Right ventricle myocardium inferior (tissue), 1 donor: ENCODE measurements at regions of chr6 and their contacts with region 1.

Region 1: GRCh38 chr6:104682722-104683643 is 176.7 kb downstream of the HACE1 start:
- DNase-seq: peak; percentile 80
- ATAC-seq: no peak

Region 2: GRCh38 chr6:104239971-104240370 is 443.0 kb before region 1 on chr6:
- intact Hi-C with region 1: no loop called
- DNase-seq: no peak
- ATAC-seq: no peak

Region 3: GRCh38 chr6:105077596-105078385 is 394.8 kb after region 1 on chr6:
- intact Hi-C with region 1: loop called (anchors 10 kb)
- DNase-seq: no peak
- ATAC-seq: no peak